CD8-positive, alpha-beta T cell (primary cell): ENCODE measurements at regions of chr1 and their contacts with region 1.

Region 1: GRCh38 chr1:163315773-163316374 is 5.9 kb upstream of the NUF2 start:
- DNase-seq: peak in 6 of 9 experiments; percentile 22 to 66 (median 50)
- ATAC-seq: peak; percentile 23
- H3K4me3 ChIP-seq: no peak overlapping the region
- H3K4me3 Mint-ChIP-seq: no peak overlapping the region
- H3K27ac ChIP-seq: no peak overlapping the region
- H3K27ac Mint-ChIP-seq: no peak overlapping the region
- H3K4me1 ChIP-seq: peaks cover 2% of the 10 kb centered on the region
- H3K4me1 Mint-ChIP-seq: peaks cover 3% of the 10 kb centered on the region
- H3K27me3 ChIP-seq: no peaks in the 10 kb centered on the region
- H3K27me3 Mint-ChIP-seq: no peaks in the 10 kb centered on the region
- CTCF ChIP-seq: peak; percentile 73

Region 2: DNA sequence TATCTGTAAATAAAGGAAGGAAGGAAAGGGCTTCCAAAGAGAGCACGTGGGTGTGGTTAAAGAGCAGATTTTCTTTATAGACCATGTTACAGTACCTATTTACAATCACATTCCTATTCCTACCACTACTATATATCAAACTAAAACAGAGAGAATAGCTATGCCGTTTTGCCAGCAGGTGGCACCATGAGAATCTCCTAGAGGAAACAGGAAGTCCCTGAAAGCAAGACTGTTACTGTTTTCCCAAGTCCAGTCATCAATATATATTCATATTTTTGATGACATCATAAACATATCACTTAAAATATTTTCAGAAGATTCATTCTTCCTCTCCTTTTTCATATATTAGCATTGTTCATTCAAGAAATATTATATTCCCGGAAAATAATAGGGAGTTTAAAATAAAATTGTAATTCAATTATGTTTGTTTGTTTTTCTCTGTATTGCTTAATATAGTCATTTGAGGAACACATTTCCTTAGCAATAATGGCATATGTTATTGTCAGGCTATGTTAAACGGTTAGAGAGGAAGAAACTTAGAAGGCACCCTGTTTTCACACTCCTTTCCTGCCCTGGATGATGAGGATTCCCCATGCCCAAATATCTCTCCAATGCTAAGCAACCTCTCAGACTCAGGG is 461.5 kb before region 1 on chr1:
- CTCF ChIA-PET with region 1: interaction called, 42 read pairs
- POLR2A ChIA-PET with region 1: no interaction called
- intact Hi-C with region 1: loop called (anchors 1 kb)
- DNase-seq: peak in 8 of 9 experiments; percentile 5 to 64 (median 44)
- ATAC-seq: no peak
- H3K4me3 ChIP-seq: no peak overlapping the region
- H3K4me3 Mint-ChIP-seq: no peak overlapping the region
- H3K27ac ChIP-seq: no peak overlapping the region
- H3K27ac Mint-ChIP-seq: no peak overlapping the region
- H3K4me1 ChIP-seq: no peaks in the 10 kb centered on the region
- H3K4me1 Mint-ChIP-seq: no peaks in the 10 kb centered on the region
- H3K27me3 ChIP-seq: no peaks in the 10 kb centered on the region
- H3K27me3 Mint-ChIP-seq: peaks cover 4% of the 10 kb centered on the region
- CTCF ChIP-seq: peak; percentile 68

Region 3: GRCh38 chr1:163071405-163072255 is 244.2 kb before region 1 on chr1:
- CTCF ChIA-PET with region 1: interaction called, 25 read pairs
- POLR2A ChIA-PET with region 1: no interaction called
- intact Hi-C with region 1: loop called in 1 of 2 experiments (anchors 2 kb)
- DNase-seq: peak in 7 of 9 experiments; percentile 2 to 50 (median 33)
- ATAC-seq: no peak
- H3K4me3 ChIP-seq: no peak overlapping the region
- H3K4me3 Mint-ChIP-seq: no peak overlapping the region
- H3K27ac ChIP-seq: no peak overlapping the region
- H3K27ac Mint-ChIP-seq: no peak overlapping the region
- H3K4me1 ChIP-seq: no peaks in the 10 kb centered on the region
- H3K4me1 Mint-ChIP-seq: no peaks in the 10 kb centered on the region
- H3K27me3 ChIP-seq: peaks cover 0 to 2% of the 10 kb centered on the region in 2 experiments
- H3K27me3 Mint-ChIP-seq: peaks cover 50% of the 10 kb centered on the region
- CTCF ChIP-seq: peak; percentile 24

Region 4: DNA sequence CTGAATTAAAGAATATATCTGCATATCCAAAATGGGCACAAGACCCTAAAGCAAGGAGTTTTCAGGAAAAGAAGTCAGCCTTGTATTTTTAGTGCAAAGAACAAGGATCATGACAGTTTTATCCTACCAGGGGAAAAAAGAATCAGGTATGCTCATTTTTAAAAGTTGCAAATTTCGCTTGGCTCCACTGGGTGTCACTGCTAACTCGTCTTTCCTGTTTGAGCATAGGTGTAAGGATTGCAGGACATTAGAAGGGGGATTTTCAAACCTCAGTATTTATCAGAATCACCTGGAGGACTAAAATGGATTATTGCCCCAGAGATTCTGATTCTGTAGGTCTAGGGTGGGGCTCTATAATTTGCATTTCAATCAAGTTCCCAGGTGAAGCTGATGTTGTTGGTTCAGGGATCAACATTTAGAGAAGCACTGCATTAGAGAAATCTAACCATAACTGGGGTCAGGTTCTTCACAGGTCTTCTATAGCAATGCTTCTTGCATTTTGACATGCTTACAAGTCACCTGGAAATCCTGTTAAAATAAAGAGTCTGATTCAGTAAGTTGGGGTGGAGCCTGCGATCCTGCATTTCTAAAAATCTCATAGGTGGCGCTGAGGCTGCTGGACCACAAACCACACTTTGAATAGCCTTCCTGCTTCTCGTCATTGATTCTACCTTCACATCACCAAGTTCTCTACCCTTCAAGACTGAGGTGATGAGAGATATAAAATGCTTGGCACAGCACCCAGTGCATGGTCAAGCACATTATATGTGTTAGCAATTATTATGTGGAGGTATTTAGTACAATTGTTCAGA is 45.5 kb after region 1 on chr1:
- CTCF ChIA-PET with region 1: no interaction called
- POLR2A ChIA-PET with region 1: no interaction called
- intact Hi-C with region 1: no loop called
- DNase-seq: peak in 1 of 9 experiments; percentile 12
- ATAC-seq: no peak
- H3K4me3 ChIP-seq: no peak overlapping the region
- H3K4me3 Mint-ChIP-seq: no peak overlapping the region
- H3K27ac ChIP-seq: no peak overlapping the region
- H3K27ac Mint-ChIP-seq: no peak overlapping the region
- H3K4me1 ChIP-seq: no peaks in the 10 kb centered on the region
- H3K4me1 Mint-ChIP-seq: peaks cover 9% of the 10 kb centered on the region
- H3K27me3 ChIP-seq: no peaks in the 10 kb centered on the region
- H3K27me3 Mint-ChIP-seq: peaks cover 6% of the 10 kb centered on the region
- CTCF ChIP-seq: no peak